RWPE1 (cell line): ENCODE measurements at regions of chr12 and their contacts with region 1.

Region 1: GRCh38 chr12:14185427-14186192 is 179.9 kb upstream of the ATF7IP start:
- DNase-seq: peak; percentile 48
- H3K27ac ChIP-seq: no peak overlapping the region
- CTCF ChIP-seq: peak; percentile 43

Region 2: DNA sequence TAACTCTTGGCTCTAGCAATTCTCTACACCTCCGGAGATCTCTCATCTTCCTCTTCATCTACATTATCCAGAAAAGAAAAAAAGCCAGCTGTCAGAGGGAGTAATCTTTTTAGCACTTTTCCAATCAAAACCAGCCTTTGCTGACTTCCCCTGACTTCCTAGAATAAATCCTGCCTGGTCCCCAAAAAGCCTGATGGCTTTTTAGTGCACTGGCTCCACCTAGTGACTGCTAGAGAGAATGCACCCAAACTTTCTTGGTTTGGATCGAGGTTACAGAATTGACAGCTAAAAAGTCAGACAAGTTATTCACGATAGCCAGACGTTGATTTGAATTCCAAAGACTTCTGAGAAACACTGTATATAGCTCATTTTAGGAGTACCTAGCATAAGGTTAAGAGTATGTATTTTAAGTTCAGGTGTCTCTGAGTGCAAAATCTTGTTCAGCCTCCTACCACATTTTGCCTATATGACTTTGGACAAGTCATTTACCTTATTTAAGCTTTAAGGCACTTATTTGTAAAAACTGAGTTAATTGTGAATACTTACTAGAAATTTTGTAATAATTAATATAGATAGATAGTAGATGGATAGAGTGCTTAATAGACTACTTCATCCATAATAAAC is 18.5 kb before region 1 on chr12:
- CTCF ChIA-PET with region 1: interaction called, 11 read pairs
- POLR2A ChIA-PET with region 1: no interaction called
- DNase-seq: peak; percentile 58
- H3K27ac ChIP-seq: no peak overlapping the region
- CTCF ChIP-seq: peak; percentile 71

Region 3: DNA sequence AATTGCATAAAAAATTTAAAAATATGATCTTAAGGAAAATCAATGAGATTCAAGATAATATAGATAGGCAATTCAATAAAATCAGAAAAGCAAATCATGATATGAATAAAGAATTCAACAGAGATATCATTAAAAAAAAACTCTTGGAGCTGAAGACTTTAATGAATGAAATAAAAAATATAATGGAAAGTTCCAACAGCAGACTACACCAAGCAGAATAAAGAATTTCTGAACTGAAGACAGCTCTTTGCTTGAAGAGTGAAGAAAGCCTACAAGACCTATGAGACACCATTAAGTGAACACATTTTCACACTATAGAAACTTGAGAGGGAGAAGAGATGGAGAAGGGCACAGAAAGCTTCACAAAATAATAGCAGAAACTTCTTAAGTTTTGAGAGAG is 336.2 kb after region 1 on chr12:
- CTCF ChIA-PET with region 1: no interaction called
- POLR2A ChIA-PET with region 1: no interaction called
- DNase-seq: no peak
- H3K27ac ChIP-seq: no peak overlapping the region
- CTCF ChIP-seq: no peak